Activated CD8-positive, alpha-beta T cell treated with anti-CD3 and anti-CD28 coated beads for 36 hours (primary cell): ENCODE measurements at regions of chr3 and their contacts with region 1.

Region 1: GRCh38 chr3:18438586-18438985 is 13.4 kb upstream of the SATB1 start:
- DNase-seq: peak; percentile 80
- ATAC-seq: peak; percentile 82
- H3K4me3 Mint-ChIP-seq: peak overlapping the region; percentile 78
- H3K27ac Mint-ChIP-seq: peak overlapping the region; percentile 86
- H3K4me1 Mint-ChIP-seq: peaks cover 30% of the 10 kb centered on the region
- H3K27me3 Mint-ChIP-seq: no peaks in the 10 kb centered on the region
- CTCF ChIP-seq: no peak

Region 2: DNA sequence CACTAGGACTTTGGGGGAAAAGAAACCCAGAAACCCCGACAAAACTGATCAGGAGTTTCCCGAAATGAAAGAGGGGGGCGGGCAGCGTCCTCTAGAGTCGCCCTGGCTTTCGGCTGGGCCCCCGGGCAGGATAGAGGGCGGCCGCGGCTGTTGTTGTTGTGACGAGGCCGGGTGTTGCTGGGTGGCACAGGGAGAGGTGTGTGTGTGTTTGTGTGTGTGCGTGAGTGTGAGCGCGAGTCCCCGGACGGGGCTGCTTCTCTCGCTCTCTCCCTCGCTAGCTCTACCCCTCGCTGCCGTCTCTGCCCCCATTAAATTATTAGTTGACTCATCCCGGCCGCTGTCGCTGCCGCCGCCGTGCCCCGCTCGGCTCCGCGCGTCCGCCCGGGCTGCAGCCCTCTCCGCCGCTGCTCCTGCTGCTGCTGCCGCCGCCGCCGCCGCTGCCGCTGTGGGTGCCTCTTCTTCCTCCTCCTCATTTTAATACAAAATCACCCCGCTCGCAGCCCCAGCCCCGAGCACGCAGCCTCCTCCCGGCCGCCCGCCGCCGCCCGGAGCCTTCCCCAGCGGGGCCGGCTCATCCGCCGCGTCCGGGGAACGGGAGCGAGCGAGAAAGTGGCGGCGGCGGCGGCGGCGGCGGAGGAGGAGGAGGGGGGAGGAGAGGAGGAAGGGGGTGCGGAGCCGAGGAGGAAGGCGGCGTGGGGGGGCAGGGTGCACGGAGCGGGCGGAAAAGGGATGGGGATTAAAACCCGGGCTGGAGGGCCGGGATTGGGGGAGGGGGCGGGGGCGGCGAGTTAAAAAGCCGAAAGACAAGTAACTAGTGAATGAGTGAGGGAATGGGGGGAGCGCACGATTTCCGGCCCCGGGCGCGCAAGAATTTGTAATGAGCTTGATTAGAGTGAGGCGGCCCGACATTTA is 13.6 kb before region 1 on chr3 and contains the start of gene SATB1:
- CTCF ChIA-PET with region 1: interaction called, 8 read pairs
- POLR2A ChIA-PET with region 1: interaction called, 330 read pairs
- intact Hi-C with region 1: loop called (anchors 2 kb)
- DNase-seq: peak; percentile 78
- ATAC-seq: peak; percentile 17
- H3K4me3 Mint-ChIP-seq: peak within 1 kb of the TSS; percentile 90
- H3K27ac Mint-ChIP-seq: peak within 1 kb of the TSS; percentile 97
- H3K4me1 Mint-ChIP-seq: peaks cover 68% of the 10 kb centered on the region
- H3K27me3 Mint-ChIP-seq: no peaks in the 10 kb centered on the region
- CTCF ChIP-seq: no peak
- total RNA-seq, gene SATB1: 208 to 213 TPM

Region 3: DNA sequence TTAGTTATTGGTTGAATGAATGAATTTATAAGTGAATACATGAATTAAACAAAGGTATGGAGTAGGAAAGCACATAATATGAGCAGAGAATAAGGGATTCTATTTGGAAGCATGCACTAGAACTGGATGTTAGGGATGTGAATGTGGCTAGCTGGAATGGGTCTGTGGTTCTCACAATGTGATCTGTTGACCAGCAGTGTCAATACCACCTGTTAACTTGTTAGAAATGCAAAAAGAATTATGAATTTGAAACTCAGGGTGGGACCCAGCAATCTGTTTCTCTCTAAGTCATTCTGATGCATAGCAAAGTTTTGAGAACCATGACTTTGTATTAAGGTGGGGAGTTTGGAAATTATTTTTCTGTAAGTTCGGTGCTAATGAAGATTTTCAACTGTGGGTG is 27.6 kb after region 1 on chr3:
- CTCF ChIA-PET with region 1: no interaction called
- POLR2A ChIA-PET with region 1: no interaction called
- intact Hi-C with region 1: no loop called
- DNase-seq: no peak
- ATAC-seq: no peak
- H3K4me3 Mint-ChIP-seq: no peak overlapping the region
- H3K27ac Mint-ChIP-seq: no peak overlapping the region
- H3K4me1 Mint-ChIP-seq: peaks cover 10% of the 10 kb centered on the region
- H3K27me3 Mint-ChIP-seq: no peaks in the 10 kb centered on the region
- CTCF ChIP-seq: no peak